PC-9 (cell line): ENCODE measurements at regions of chr1 and their contacts with region 1.

Region 1: DNA sequence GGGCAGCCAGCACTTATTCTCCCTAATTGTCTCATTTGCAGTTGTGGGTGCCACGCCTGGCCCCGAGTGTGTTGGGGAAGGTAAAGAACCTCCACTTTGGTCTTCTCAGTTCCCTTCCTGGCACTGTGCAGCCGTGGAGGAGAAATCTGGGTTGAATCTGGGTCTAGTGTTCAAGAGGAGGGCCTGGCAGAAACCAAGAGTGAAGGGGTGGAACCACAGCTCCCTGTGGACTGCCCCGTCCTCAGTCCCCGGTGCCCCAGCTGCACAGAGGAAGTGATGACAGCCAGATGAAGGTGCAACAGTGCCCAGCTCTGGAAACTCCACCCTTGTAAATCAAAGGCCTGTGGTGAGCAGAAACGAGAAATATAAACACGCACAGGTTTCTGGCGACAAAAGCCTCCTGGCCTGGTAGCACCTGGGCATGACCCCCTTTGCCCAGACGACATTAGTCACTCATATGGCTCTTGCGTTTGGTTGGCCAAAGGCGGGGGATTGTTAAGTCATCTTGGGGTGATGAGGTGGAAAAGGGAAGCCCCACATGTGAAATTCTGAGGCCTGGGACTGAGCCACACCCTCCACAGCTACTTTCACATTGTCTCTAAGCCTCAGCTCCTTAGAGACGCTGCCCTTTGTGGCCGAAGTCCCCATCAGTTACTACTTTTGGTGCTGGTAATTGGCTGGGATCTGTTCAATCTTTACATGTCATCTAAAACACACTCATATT is 4.2 kb upstream of the ECE1 start:
- DNase-seq: peak; percentile 71 to 85
- H3K4me3 ChIP-seq: peak overlapping the region; percentile 2; the same call in 1 of the 2 replicates
- H3K27ac ChIP-seq: peak overlapping the region; percentile 94
- H3K4me1 ChIP-seq: peaks cover 42% of the 10 kb centered on the region
- H3K27me3 ChIP-seq: no peaks in the 10 kb centered on the region
- CTCF ChIP-seq: no peak

Region 2: DNA sequence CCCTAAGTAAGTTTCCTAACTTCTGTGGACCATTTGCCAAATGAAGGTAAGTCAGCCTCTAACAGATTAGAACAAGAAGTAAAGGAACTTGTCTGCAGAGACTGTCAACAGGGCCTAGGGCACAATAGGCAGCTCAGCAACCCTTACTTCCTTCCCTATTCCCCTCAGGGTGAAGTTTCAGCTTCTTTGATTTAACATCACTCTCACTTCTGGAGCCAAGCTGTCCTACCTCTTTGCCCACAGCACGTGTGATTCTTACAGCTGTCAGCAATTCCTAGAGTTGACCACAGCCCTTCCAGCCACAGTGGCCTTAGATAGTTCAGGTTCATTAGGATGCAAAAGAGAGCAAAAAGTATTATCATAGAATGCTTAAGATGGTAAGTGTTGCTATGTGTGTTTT is 110.2 kb before region 1 on chr1:
- CTCF ChIA-PET with region 1: no interaction called
- POLR2A ChIA-PET with region 1: no interaction called
- intact Hi-C with region 1: no loop called
- DNase-seq: no peak
- H3K4me3 ChIP-seq: no peak overlapping the region
- H3K27ac ChIP-seq: no peak overlapping the region
- H3K4me1 ChIP-seq: no peaks in the 10 kb centered on the region
- H3K27me3 ChIP-seq: no peaks in the 10 kb centered on the region
- CTCF ChIP-seq: no peak

Region 3: GRCh38 chr1:21261551-21262281 is 32.7 kb before region 1 on chr1:
- CTCF ChIA-PET with region 1: interaction called, 15 read pairs
- POLR2A ChIA-PET with region 1: interaction called, 3 read pairs
- intact Hi-C with region 1: no loop called
- DNase-seq: peak; percentile 77 to 82
- H3K4me3 ChIP-seq: no peak overlapping the region
- H3K27ac ChIP-seq: peak overlapping the region; percentile 96
- H3K4me1 ChIP-seq: peaks cover 26% of the 10 kb centered on the region
- H3K27me3 ChIP-seq: no peaks in the 10 kb centered on the region
- CTCF ChIP-seq: no peak

Region 4: DNA sequence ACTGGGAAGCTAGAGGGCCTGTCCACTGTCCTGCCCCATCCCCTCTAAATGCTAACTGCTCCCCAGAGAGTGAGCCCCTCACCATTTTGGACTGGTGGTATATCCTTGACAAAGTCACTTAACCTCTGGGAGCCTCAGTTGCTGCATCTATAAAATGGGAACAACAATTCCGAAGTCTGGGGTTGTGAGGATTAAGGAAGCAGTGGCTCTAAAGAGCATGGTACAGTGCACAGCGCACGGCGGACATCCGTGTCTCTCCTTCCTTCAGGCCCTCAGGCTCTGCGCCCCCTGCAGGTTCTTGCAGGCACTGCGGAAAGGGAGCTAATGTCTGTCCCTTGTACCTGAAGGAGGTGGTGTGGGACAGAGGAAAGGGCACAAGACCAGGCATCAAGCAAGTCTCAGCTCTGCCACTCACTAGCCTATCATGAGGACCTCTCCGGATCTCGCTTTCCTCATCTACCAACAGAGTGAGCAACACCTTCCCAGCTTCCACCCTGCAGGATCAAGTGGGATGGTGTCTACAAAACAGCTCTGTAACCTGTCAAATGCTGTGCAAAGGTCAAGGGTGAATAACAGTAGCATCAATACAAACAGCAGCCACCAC is 24.2 kb before region 1 on chr1:
- CTCF ChIA-PET with region 1: no interaction called
- POLR2A ChIA-PET with region 1: no interaction called
- intact Hi-C with region 1: loop called (anchors 2 kb)
- DNase-seq: peak in 1 of 2 experiments; percentile 46
- H3K4me3 ChIP-seq: no peak overlapping the region
- H3K27ac ChIP-seq: no peak overlapping the region
- H3K4me1 ChIP-seq: no peaks in the 10 kb centered on the region
- H3K27me3 ChIP-seq: no peaks in the 10 kb centered on the region
- CTCF ChIP-seq: peak; percentile 85